Posterior vena cava (tissue), 2 donors: ENCODE measurements at regions of chrX and their contacts with region 1.

Region 1: DNA sequence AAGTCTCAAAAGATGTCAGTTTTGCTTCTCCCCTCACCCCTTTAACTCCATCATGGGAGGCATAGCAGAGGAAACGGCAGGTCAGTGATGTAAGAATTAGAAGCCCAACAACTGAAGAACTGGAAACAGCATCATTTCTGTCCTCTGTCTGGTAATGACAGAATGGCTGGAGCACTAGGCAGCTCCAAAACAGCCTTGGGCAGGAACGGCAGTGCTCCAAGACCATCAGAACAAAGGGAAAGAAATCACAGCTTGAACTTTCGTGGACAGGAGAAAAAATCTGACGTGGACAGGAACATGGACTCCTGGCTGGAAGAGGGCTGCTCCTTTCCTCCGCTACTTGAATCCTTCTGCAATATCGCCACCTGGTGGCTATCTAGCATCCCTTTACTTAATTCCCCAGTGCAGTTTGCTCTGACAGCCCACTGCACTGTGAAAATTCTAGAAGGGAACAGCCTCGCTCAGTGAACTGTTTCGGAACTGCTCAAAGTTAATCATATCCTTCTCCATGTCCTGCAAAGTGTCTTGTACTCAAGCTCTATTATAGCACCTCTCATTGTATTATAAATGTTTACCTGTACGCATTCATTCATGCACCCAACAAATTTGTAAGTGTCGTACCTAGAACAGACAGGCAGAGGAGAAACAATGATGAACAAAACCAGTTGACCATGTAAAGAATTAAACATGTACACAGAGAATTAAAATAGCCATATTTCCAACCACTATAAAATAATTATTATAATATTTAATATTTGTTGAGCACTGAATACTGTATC is 20.4 kb downstream of the SLC25A53 start:
- DNase-seq: no peak

Region 2: DNA sequence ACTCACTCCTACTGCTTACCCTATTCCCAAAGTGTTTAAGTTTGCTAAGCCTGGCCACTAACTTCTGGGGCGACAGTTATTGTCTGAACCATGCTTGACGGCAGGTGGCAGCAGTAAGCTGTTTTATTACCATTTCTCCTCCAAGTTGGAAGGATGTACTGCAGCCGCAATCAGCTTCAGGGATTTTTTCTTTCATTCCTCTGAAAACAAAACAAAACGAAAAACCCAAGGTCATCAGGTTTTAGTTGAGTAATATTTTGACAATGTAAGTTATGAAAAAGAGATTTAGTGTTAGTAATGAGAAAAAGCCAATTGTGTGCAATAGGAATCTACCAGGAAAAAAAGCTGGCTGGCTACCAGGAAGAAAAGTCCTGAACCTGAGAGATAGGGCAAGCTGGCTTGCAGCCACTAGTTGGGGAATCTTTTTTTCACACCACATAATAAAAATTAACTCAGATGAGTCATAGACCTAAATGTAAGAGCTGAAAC is 291.2 kb before region 1 on chrX:
- intact Hi-C with region 1: loop called in 1 of 2 experiments (anchors 10 kb)
- DNase-seq: no peak